ENCODE measurements at regions of chr7 and their contacts with region 1.

Region 1: DNA sequence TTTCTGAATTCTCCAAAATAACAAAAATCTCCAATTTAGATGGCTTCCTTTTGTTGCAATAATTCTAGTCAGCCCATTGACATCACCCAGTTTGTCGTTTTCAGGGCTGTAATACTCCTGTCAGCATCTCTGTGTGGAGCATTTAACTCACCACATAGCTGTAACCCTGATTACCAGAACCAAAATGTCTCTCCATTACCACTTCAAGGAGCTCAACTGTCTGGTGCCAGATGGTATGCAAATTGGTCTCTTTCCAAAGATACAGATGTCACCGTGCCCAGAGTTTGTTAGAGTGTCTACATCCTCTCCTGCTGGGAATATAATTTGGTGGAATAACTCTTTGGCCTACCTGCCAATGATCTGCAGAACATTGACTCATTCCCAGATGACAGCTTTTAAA is 350.3 kb upstream of the POT1 start:
- DNase-seq: no peak
- H3K4me3 ChIP-seq: no peak overlapping the region
- H3K27ac ChIP-seq: no peak overlapping the region
- H3K4me1 ChIP-seq: no peaks in the 10 kb centered on the region
- H3K27me3 ChIP-seq: no peaks in the 10 kb centered on the region
- CTCF ChIP-seq: no peak

Region 2: DNA sequence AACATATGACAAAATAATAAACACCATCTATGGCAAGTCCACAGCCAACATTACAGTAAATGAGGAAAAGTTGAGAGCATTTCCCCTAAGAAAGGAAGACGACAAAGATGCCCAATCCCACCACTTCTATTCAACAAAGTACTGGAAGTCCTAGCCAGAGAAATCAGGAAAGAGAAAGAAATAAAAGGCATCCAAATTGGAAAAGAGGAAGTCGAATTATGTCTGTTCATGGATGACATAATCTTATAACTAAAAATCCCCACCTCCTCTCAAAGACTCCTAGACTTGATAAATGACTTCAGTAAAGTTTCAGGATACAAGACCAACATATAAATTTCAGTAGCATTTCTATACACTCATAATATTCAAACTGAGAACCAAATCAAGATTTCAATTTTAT is 61.9 kb before region 1 on chr7:
- CTCF ChIA-PET with region 1: no interaction called
- dilution Hi-C with region 1: loop called (anchors 5 kb)
- in situ Hi-C with region 1: no loop called
- intact Hi-C with region 1: no loop called
- DNase-seq: no peak
- H3K4me3 ChIP-seq: no peak overlapping the region
- H3K27ac ChIP-seq: no peak overlapping the region
- H3K4me1 ChIP-seq: no peaks in the 10 kb centered on the region
- H3K27me3 ChIP-seq: no peaks in the 10 kb centered on the region
- CTCF ChIP-seq: no peak

Region 3: GRCh38 chr7:125347269-125347668 is 67.3 kb after region 1 on chr7:
- CTCF ChIA-PET with region 1: no interaction called
- dilution Hi-C with region 1: no loop called
- in situ Hi-C with region 1: no loop called
- intact Hi-C with region 1: no loop called
- DNase-seq: no peak
- H3K4me3 ChIP-seq: no peak overlapping the region
- H3K27ac ChIP-seq: no peak overlapping the region
- H3K4me1 ChIP-seq: no peaks in the 10 kb centered on the region
- H3K27me3 ChIP-seq: no peaks in the 10 kb centered on the region
- CTCF ChIP-seq: no peak